T-cell (primary cell): ENCODE measurements at regions of chr19 and their contacts with region 1.

Region 1: DNA sequence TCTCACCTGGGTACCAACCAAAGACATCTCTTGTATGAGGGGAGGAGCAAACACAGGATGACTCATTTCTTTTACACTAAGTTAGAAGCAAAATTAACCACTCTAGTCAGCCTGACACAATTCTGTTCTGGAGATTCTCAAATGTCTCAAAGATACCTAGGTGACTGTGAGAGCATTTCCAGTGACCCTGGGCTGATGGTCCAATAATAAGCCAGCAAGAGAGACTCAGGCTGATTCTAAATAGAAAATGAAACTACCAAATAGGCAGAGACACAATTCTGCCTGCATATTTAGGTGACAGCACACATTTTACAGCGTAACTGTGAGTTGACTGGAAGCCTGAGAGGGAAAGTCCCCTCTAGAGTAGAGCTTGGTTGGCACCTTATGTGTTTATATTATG is 16.3 kb downstream of the ZNF91 start:
- DNase-seq: peak in 1 of 35 experiments; percentile 8
- ATAC-seq: no peak
- H3K4me3 ChIP-seq: no peak overlapping the region
- H3K4me3 Mint-ChIP-seq: no peak overlapping the region
- H3K27ac ChIP-seq: no peak overlapping the region
- H3K27ac Mint-ChIP-seq: no peak overlapping the region
- H3K4me1 ChIP-seq: peaks cover 0 to 4% of the 10 kb centered on the region in 2 experiments
- H3K4me1 Mint-ChIP-seq: peaks cover 19 to 36% (median 32%) of the 10 kb centered on the region in 3 donors
- H3K27me3 ChIP-seq: no peaks in the 10 kb centered on the region
- H3K27me3 Mint-ChIP-seq: no peaks in the 10 kb centered on the region

Region 2: GRCh38 chr19:23395041-23395721 is 16.2 kb after region 1 on chr19 and contains the start of gene ZNF91:
- CTCF ChIA-PET with region 1: no interaction called
- POLR2A ChIA-PET with region 1: interaction called in 1 of 2 experiments, 11 read pairs
- DNase-seq: peak; percentile 80 to 96 (median 94)
- ATAC-seq: peak; percentile 97 to 99 (median 98)
- H3K4me3 ChIP-seq: peak within 1 kb of the TSS; percentile 66 to 92
- H3K4me3 Mint-ChIP-seq: peak within 1 kb of the TSS; percentile 95 to 99 (median 99)
- H3K27ac ChIP-seq: peak within 1 kb of the TSS; percentile 92
- H3K27ac Mint-ChIP-seq: peak within 1 kb of the TSS; percentile 98 to 99
- H3K4me1 ChIP-seq: peaks cover 2 to 29% of the 10 kb centered on the region in 2 experiments
- H3K4me1 Mint-ChIP-seq: peaks cover 29 to 45% (median 31%) of the 10 kb centered on the region in 3 donors
- H3K27me3 ChIP-seq: no peaks in the 10 kb centered on the region
- H3K27me3 Mint-ChIP-seq: no peaks in the 10 kb centered on the region
- total RNA-seq, gene ZNF91: 76.0 to 103 (median 80.4) TPM